ENCODE measurements at regions of chr20 and their contacts with region 1.

Region 1: DNA sequence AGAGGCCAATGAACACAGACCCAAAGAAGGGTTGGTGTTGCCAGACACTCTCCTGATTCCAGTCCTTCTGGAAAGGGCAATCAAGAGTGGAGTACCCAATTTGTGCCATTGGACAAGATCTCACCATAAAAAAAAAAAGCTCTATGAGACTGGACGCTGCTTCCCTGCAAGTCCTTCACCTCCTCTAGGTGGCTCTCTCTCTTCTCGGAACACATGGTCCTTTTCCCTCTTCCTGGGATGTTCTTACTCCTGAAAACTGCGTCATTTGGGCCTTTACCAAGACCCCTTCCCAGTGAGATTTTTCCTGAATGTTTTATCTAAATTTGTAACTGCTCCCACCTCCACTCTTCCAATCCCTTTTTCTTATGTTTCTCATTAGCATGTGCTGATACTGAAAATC is 280.8 kb downstream of the FOXA2 start:
- DNase-seq: peak; percentile 43
- ATAC-seq: peak; percentile 87
- H3K4me3 ChIP-seq: no peak overlapping the region
- H3K27ac ChIP-seq: no peak overlapping the region
- H3K4me1 ChIP-seq: no peaks in the 10 kb centered on the region
- H3K27me3 ChIP-seq: 0 out of 5 replicates have a peak, but pooled peaks cover 0 to 6% of the 10 kb centered on the region in 2 experiments
- CTCF ChIP-seq: peak; percentile 42; the same call in 1 of the 2 replicates
- EP300 ChIP-seq: no peak
- POLR2A ChIP-seq: no peak
- RAD21 ChIP-seq: no peak

Region 2: DNA sequence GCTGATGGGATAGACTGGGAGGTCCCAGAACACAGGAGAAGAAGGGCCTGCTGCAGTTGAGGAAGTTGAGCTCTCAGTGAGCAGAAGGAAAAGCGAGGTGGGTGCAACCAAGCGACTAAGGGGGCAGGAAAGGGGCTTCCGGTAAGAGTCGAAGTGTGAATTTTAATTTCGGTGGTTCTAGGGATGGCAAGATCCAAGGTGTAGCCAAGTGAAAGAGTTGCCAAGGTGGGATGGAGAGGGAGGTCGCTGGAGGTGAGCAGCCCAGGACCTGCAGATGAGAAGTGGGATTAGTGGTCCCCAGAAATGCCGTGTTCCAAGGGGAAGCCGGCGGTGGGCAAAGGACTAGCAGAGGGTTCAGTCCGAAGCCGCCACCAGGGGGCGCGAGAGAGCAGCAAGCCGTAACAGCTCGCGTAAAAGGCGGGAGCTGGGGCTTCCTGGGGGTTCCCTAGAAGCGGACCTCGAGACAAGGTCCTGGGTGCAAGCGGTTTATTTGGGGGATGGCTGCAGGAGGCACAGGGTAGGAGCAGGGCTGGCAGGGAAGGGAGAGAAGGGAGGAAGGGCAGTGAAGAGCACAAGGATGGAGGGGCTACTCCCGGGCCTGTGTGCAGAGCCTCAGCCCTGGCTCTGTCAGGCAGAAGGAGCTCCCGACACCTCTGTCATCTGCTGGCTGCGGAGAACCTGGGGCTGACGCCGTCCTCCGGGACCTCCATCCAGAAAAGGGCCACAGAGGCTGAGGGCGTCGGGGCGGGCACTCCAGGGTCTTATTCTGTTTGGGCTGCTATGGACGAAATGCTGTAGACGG is 494.5 kb before region 1 on chr20:
- CTCF ChIA-PET with region 1: no interaction called
- POLR2A ChIA-PET with region 1: no interaction called
- in situ Hi-C with region 1: loop called (anchors 10 kb)
- intact Hi-C with region 1: no loop called
- DNase-seq: peak; percentile 31
- ATAC-seq: peak; percentile 92
- H3K4me3 ChIP-seq: no peak overlapping the region
- H3K27ac ChIP-seq: no peak overlapping the region
- H3K4me1 ChIP-seq: no peaks in the 10 kb centered on the region
- H3K27me3 ChIP-seq: peaks cover 3 to 10% of the 10 kb centered on the region in 2 experiments; a peak in 2 of 5 replicates
- CTCF ChIP-seq: peak; percentile 94
- EP300 ChIP-seq: no peak
- POLR2A ChIP-seq: no peak
- RAD21 ChIP-seq: peak; percentile 83

Region 3: DNA sequence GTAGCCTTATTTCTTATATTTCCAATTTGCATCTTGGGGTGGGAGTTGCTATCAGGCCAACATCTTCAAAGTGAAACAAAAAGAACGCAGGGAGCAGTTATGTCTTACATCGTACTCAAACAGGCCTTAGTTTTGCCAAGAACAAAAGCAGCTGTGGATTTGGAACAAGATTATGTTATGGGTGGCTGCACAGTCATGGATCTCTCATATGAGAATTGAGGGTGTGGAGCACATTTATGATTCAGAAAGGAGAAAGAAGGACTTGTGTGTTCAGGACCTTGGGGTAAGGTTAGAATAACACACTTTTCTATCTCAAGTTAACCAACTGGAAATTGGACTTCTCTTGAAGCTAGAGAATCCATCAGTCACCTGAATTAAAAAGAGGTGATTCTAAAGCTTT is 21.0 kb after region 1 on chr20:
- CTCF ChIA-PET with region 1: no interaction called
- POLR2A ChIA-PET with region 1: no interaction called
- in situ Hi-C with region 1: no loop called
- intact Hi-C with region 1: no loop called
- DNase-seq: no peak
- ATAC-seq: no peak
- H3K4me3 ChIP-seq: no peak overlapping the region
- H3K27ac ChIP-seq: no peak overlapping the region
- H3K4me1 ChIP-seq: no peaks in the 10 kb centered on the region
- H3K27me3 ChIP-seq: peaks cover 0 to 3% of the 10 kb centered on the region in 2 experiments; a peak in 1 of 5 replicates
- CTCF ChIP-seq: no peak
- EP300 ChIP-seq: no peak
- POLR2A ChIP-seq: no peak
- RAD21 ChIP-seq: no peak

Measured in HepG2 (cell line).